ENCODE measurements at regions of chr7 and their contacts with region 1.

Region 1: GRCh38 chr7:100604028-100604975 is 2.1 kb downstream of the PCOLCE start:
- DNase-seq: peak; percentile 85
- ATAC-seq: peak; percentile 75
- H3K4me3 ChIP-seq: peak overlapping the region; percentile 36 to 85 (median 75)
- H3K4me3 Mint-ChIP-seq: peak overlapping the region; percentile 90
- H3K27ac ChIP-seq: peak overlapping the region; percentile 43 to 54
- H3K27ac Mint-ChIP-seq: peak overlapping the region; percentile 80
- H3K4me1 ChIP-seq: peaks cover 15 to 25% of the 10 kb centered on the region in 2 donors
- H3K4me1 Mint-ChIP-seq: peaks cover 12% of the 10 kb centered on the region
- H3K27me3 ChIP-seq: no peaks in the 10 kb centered on the region
- H3K27me3 Mint-ChIP-seq: no peaks in the 10 kb centered on the region
- CTCF ChIP-seq: peak; percentile 68

Region 2: DNA sequence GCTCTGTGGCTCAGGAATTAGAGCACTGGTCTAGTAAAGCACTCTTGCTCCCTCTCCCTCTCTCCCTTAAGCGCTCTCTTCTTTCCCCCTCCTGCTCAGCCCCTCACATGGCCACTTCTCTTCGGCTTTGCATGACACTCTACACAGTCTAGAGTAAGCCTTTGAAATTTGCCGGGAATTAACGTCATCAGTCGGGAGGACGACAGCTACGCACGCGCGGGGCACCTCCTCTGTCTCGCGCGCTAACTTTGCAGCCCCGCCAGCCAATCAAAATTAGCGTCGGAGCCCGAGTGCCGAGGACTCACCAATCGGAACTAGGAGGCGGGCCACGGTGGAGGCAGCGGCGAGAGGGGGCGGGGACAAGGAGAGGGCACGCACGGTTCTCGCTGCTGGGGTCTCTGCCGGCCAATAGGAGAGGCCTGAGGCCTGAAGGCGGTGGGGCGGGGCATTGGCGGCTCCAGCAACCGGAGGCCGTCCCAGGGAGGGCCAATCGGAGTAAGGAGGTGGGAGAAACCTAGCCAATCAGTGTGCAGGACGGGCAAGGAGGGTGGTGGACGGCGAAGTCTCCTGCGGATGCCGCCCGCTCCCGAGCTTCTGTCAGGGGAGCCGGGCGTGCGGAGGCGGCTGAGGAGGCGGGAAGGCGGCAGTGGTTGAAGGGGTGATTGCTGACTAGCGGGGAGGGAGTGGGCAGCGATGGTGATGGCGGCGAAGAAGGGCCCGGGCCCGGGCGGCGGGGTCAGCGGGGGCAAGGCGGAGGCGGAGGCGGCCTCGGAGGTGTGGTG is 65.5 kb before region 1 on chr7 and contains the start of gene AGFG2:
- CTCF ChIA-PET with region 1: no interaction called
- POLR2A ChIA-PET with region 1: no interaction called
- intact Hi-C with region 1: loop called (anchors 2 kb)
- DNase-seq: peak; percentile 100
- ATAC-seq: peak; percentile 97
- H3K4me3 ChIP-seq: peak within 1 kb of the TSS; percentile 62 to 84 (median 72)
- H3K4me3 Mint-ChIP-seq: peak within 1 kb of the TSS; percentile 91
- H3K27ac ChIP-seq: peak within 1 kb of the TSS in 1 of 2 donors; percentile 42
- H3K27ac Mint-ChIP-seq: peak within 1 kb of the TSS; percentile 76
- H3K4me1 ChIP-seq: peaks cover 14 to 23% of the 10 kb centered on the region in 2 donors
- H3K4me1 Mint-ChIP-seq: peaks cover 36% of the 10 kb centered on the region
- H3K27me3 ChIP-seq: no peaks in the 10 kb centered on the region
- H3K27me3 Mint-ChIP-seq: no peaks in the 10 kb centered on the region
- CTCF ChIP-seq: no peak
- total RNA-seq, gene AGFG2: 11.0 and 11.6 TPM in 2 replicates

Region 3: GRCh38 chr7:100626530-100627237 is 22.4 kb after region 1 on chr7:
- CTCF ChIA-PET with region 1: interaction called, 3 read pairs
- POLR2A ChIA-PET with region 1: interaction called, 5 read pairs
- intact Hi-C with region 1: loop called (anchors 1 kb)
- DNase-seq: peak; percentile 83
- ATAC-seq: peak; percentile 99
- H3K4me3 ChIP-seq: peak overlapping the region in 4 of 5 experiments; percentile 21 to 53 (median 44)
- H3K4me3 Mint-ChIP-seq: peak overlapping the region; percentile 80
- H3K27ac ChIP-seq: peak overlapping the region in 1 of 2 donors; percentile 55
- H3K27ac Mint-ChIP-seq: no peak overlapping the region
- H3K4me1 ChIP-seq: peaks cover 12 to 13% of the 10 kb centered on the region in 2 donors
- H3K4me1 Mint-ChIP-seq: peaks cover 11% of the 10 kb centered on the region
- H3K27me3 ChIP-seq: no peaks in the 10 kb centered on the region
- H3K27me3 Mint-ChIP-seq: no peaks in the 10 kb centered on the region
- CTCF ChIP-seq: no peak

Region 4: GRCh38 chr7:100673300-100673941 is 69.1 kb after region 1 on chr7 and contains the start of gene GNB2:
- CTCF ChIA-PET with region 1: no interaction called
- POLR2A ChIA-PET with region 1: interaction called, 3 read pairs
- intact Hi-C with region 1: loop called (anchors 1 kb)
- DNase-seq: peak; percentile 99
- ATAC-seq: peak; percentile 65
- H3K4me3 ChIP-seq: peak within 1 kb of the TSS; percentile 53 to 99 (median 98)
- H3K4me3 Mint-ChIP-seq: peak within 1 kb of the TSS; percentile 96
- H3K27ac ChIP-seq: peak within 1 kb of the TSS; percentile 89 to 97
- H3K27ac Mint-ChIP-seq: peak within 1 kb of the TSS; percentile 97
- H3K4me1 ChIP-seq: peaks cover 0 to 6% of the 10 kb centered on the region in 2 donors
- H3K4me1 Mint-ChIP-seq: peaks cover 8% of the 10 kb centered on the region
- H3K27me3 ChIP-seq: no peaks in the 10 kb centered on the region
- H3K27me3 Mint-ChIP-seq: no peaks in the 10 kb centered on the region
- CTCF ChIP-seq: no peak
- total RNA-seq, gene GNB2: 127 TPM in 2 replicates

Measured in B cell (primary cell).